Activated naive CD4-positive, alpha-beta T cell treated with anti-CD3 and anti-CD28 coated beads for 36 hours (primary cell): ENCODE measurements at regions of chr10 and their contacts with region 1.

Region 1: DNA sequence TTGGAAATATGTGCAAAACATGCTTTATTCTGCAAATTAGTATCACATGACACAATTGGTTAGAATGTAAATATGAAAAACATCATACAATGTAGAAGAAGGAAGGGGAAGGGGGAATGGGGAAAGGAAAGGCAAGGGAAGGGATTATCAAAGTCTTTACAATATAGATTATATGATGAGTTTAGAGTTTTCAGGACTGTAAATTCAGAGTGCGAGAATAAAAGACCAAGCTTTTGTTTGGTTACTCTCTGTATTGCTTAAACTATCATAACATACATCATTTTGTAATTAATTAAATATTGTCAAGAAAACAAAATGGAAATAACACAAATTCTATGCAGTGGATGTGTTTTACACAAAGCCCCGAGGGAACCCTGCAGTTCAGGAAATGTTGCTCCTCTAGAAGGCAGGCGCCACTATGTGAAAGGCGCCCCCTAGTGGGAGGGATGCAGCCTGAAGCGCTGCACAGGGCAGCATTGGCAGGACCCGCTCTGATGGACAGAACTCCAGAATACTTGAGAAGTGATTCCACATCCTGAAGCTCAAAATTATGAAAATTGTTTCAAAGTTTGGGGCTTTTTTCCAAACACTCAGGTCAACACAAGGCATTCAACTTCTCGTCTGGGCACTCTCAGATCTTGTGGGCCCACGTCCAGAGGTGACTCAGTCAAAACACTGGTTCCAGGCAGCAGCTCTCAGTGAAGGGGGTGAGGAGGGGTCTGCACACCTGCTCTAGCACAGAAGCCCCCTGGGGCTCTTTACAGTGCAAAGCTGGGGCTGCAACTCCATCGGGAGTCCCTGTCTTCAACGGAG is 31.6 kb upstream of the TMEM254 start:
- DNase-seq: peak; percentile 83
- H3K4me3 Mint-ChIP-seq: no peak overlapping the region
- H3K27ac Mint-ChIP-seq: no peak overlapping the region
- H3K4me1 Mint-ChIP-seq: no peaks in the 10 kb centered on the region
- H3K27me3 Mint-ChIP-seq: no peaks in the 10 kb centered on the region

Region 2: GRCh38 chr10:79454259-79454658 is 592.6 kb before region 1 on chr10:
- CTCF ChIA-PET with region 1: no interaction called
- intact Hi-C with region 1: no loop called
- DNase-seq: no peak
- H3K4me3 Mint-ChIP-seq: no peak overlapping the region
- H3K27ac Mint-ChIP-seq: no peak overlapping the region
- H3K4me1 Mint-ChIP-seq: no peaks in the 10 kb centered on the region
- H3K27me3 Mint-ChIP-seq: peaks cover 5% of the 10 kb centered on the region

Region 3: GRCh38 chr10:79542626-79543025 is 504.2 kb before region 1 on chr10:
- CTCF ChIA-PET with region 1: interaction called, 7 read pairs
- intact Hi-C with region 1: loop called (anchors 1 kb)
- DNase-seq: no peak
- H3K4me3 Mint-ChIP-seq: no peak overlapping the region
- H3K27ac Mint-ChIP-seq: no peak overlapping the region
- H3K4me1 Mint-ChIP-seq: peaks cover 6% of the 10 kb centered on the region
- H3K27me3 Mint-ChIP-seq: no peaks in the 10 kb centered on the region

Region 4: DNA sequence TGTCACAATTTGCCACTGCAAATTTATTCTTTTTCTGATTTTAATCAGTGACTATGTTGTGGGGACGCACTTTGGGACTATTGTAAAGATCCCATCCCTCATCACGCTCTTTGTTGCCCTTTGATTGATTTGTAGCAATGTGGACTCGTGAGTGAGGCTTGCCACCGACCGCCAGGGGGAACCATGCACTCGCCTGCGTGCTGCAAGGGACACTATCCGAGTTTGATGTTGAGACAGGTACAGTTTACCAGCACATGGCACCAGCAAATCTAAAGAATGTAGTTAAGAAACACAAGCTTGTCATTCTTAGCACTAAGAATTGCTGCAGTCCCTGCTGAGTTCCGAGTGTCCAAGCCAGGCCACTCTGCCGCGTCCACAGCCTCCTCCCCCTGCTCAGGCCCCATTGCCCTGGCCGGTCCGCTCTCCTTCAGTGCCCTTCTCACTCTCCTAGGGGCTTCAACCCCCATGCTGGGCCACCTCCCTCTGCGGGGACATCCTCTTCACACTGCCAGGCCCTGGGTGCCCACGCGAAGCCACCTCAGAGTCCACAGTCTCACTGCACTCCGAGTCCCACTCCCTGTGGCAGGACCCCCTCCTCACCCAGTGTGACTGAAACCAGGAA is 484.6 kb before region 1 on chr10:
- CTCF ChIA-PET with region 1: no interaction called
- intact Hi-C with region 1: loop called (anchors 2 kb)
- DNase-seq: peak; percentile 81
- H3K4me3 Mint-ChIP-seq: no peak overlapping the region
- H3K27ac Mint-ChIP-seq: no peak overlapping the region
- H3K4me1 Mint-ChIP-seq: peaks cover 6% of the 10 kb centered on the region
- H3K27me3 Mint-ChIP-seq: peaks cover 12% of the 10 kb centered on the region

Region 5: DNA sequence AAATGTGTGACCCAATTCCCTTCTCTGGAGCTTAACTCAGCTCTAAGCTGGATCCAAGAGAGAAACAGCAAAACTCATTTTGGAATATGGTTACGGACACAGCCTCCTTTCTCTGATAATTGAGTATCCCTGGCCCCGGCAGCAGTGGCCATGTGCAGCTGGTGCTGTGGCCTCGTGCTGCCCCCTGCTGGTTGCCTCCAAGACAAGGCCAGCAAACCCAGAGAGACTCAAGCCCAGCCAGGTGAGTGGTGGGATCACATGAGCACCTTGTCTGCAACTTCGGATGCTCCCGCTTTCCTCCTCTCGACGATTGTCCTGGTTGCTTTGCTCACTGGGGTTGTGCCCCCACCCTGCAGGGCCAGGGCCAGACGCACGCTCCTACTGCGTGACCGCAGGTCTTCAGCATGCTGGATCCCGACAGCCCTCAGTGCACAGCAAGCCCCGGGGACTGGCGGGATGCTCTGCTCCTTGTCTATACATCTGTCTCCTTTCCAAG is 117.4 kb before region 1 on chr10:
- CTCF ChIA-PET with region 1: no interaction called
- intact Hi-C with region 1: loop called (anchors 5 kb)
- DNase-seq: peak; percentile 88
- H3K4me3 Mint-ChIP-seq: no peak overlapping the region
- H3K27ac Mint-ChIP-seq: no peak overlapping the region
- H3K4me1 Mint-ChIP-seq: peaks cover 3% of the 10 kb centered on the region
- H3K27me3 Mint-ChIP-seq: peaks cover 21% of the 10 kb centered on the region

Region 6: DNA sequence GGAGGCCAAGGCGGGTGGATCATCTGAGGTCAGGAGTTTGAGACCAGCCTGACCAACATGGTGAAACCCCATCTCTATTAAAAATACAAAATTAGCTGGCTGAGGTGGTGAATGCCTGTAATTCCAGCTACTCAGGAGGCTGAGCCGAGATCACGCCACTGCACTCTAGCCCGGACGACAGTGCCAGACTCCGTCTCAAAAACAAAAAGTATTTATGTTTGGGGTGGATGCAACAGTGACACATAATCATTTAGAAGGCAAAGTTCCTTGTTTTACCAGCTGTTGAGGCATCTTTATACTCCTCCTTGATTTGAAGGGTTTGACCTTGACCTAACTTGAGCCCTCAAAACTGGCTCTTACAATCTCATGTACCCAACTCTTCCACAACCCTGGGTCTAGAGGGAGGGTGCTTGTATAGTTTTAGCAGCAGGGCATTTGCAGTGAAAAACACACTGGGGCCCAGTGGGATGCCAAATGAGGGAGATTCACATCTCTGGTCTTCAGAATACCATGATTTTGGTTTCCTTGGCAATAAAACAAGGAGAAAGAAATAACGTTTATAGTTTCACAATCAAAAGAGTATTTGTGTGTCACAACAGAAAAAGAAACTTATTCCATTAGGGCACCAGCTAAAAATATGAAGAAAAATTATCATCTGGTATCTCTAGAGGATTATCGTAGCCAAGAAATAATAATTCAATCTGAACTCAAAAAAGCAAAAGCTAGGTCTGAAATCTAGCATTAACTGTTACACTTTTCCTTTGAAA is 17.5 kb after region 1 on chr10:
- CTCF ChIA-PET with region 1: interaction called, 11 read pairs
- intact Hi-C with region 1: no loop called
- DNase-seq: no peak
- H3K4me3 Mint-ChIP-seq: no peak overlapping the region
- H3K27ac Mint-ChIP-seq: no peak overlapping the region
- H3K4me1 Mint-ChIP-seq: no peaks in the 10 kb centered on the region
- H3K27me3 Mint-ChIP-seq: no peaks in the 10 kb centered on the region

Region 7: DNA sequence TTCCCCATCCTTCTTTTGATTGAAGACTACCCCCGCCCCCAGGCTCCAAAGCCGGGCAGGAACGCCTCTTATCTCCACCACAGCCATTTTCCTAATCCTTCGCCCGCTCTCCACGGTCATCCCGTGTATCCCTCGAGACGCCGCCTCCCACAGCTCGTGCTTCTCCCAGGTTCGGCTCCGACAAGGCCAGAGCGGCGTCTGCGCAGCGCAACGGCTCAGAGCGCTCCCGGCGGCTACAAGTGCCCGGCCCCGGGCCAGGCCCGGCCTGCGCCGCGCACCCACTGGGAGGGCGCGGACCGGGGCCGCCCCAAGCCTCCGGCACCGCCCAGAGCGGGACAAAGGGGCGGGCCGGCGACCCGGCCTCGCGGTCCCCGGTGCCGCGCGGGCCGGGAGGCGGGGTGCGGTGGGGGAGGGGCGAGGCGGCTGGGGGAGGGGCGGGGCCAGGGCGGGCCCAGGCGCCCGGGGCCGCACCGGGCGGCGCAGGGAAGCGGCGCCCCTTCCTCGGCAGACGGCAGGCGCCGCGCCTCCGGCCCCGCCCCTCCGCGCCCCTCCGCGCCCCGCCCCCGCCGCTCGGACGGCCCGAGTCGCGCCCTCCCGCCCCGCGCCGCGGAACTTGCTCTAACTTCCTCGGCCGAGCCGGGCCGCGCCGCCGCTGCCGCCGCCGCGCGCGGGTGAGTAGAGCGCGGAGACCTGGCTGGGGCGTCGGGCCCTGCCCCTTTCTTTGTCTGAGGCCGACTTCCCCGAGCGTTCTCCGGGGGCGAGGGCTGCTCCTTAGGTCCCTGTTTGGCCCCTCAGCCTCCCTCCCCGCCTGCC is 407.1 kb after region 1 on chr10 and contains the start of gene TSPAN14:
- CTCF ChIA-PET with region 1: no interaction called
- intact Hi-C with region 1: no loop called
- DNase-seq: peak; percentile 74
- H3K4me3 Mint-ChIP-seq: peak within 1 kb of the TSS; percentile 98
- H3K27ac Mint-ChIP-seq: peak within 1 kb of the TSS; percentile 93
- H3K4me1 Mint-ChIP-seq: peaks cover 44% of the 10 kb centered on the region
- H3K27me3 Mint-ChIP-seq: no peaks in the 10 kb centered on the region
- total RNA-seq, gene TSPAN14: 33.5 to 35.5 TPM